PC-3 (cell line): ENCODE measurements at regions of chr9 and their contacts with region 1.

Region 1: GRCh38 chr9:132669698-132670456 is at the start of gene DDX31:
- DNase-seq: peak; percentile 65
- ATAC-seq: peak; percentile 75
- H3K4me3 ChIP-seq: peak within 1 kb of the TSS; percentile 91
- H3K27ac ChIP-seq: peak within 1 kb of the TSS; percentile 93
- H3K4me1 ChIP-seq: peaks cover 25% of the 10 kb centered on the region
- H3K27me3 ChIP-seq: no peaks in the 10 kb centered on the region
- CTCF ChIP-seq: no peak
- total RNA-seq, gene DDX31: 14.2 and 14.6 TPM in 2 replicates

Region 2: DNA sequence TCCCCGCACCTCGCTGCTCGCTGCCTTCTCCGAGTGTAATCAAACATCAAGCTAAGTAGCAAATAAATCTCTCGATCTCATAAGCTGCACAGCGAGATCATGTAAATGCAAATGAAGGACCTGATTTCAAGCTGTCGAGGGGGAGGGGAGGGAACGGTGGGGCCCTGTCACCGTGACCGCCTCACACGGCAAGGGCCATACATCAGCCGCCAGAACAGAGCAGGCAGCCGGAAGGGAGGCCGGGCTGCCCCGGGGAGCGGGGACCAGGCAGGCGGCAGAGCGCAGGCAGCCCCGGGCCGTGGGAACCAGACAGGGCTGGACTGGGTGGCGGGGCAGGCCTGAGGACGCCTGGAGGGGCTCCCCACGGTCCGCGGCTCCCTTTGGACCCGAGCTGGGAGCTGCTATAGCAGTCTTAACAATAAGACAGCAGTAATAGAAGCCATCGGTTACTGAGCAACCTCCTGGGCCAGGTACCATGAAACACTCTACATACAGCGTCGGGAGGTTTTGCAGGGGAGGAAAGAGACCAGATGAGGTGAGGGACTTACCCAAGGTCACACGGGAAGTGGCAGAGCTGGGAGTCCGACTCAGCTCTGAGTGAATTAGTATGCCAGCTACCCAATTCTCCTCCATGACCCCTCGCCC is 183.0 kb before region 1 on chr9:
- CTCF ChIA-PET with region 1: no interaction called
- POLR2A ChIA-PET with region 1: no interaction called
- intact Hi-C with region 1: no loop called
- DNase-seq: no peak
- ATAC-seq: no peak
- H3K4me3 ChIP-seq: no peak overlapping the region
- H3K27ac ChIP-seq: no peak overlapping the region
- H3K4me1 ChIP-seq: no peaks in the 10 kb centered on the region
- H3K27me3 ChIP-seq: peaks cover 43% of the 10 kb centered on the region
- CTCF ChIP-seq: no peak

Region 3: GRCh38 chr9:132622159-132622558 is 47.7 kb before region 1 on chr9:
- CTCF ChIA-PET with region 1: no interaction called
- POLR2A ChIA-PET with region 1: interaction called, 5 read pairs
- intact Hi-C with region 1: loop called (anchors 10 kb)
- DNase-seq: peak; percentile 34
- ATAC-seq: no peak
- H3K4me3 ChIP-seq: no peak overlapping the region
- H3K27ac ChIP-seq: no peak overlapping the region
- H3K4me1 ChIP-seq: peaks cover 25% of the 10 kb centered on the region
- H3K27me3 ChIP-seq: no peaks in the 10 kb centered on the region
- CTCF ChIP-seq: no peak

Region 4: DNA sequence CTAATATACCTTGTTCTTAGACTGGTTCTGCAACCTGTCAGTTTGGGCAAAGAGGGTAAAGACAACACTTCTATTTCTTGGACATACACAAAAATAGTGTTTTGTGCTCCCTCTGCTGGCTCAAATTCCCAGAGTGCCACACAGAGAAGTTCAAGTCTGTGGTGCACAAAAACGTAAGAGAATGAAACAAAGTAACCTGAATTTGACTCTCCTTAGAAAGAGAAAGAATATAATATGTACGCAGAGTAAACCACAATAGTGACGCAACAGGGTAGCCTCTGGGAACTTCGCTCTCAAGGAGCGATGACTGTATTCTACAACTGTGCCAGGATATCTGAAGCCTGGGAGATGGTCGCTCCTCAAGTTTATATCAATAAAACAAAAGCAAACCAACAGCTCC is 18.6 kb before region 1 on chr9:
- CTCF ChIA-PET with region 1: no interaction called
- POLR2A ChIA-PET with region 1: no interaction called
- intact Hi-C with region 1: no loop called
- DNase-seq: peak; percentile 78
- ATAC-seq: peak; percentile 83
- H3K4me3 ChIP-seq: no peak overlapping the region
- H3K27ac ChIP-seq: peak overlapping the region; percentile 81
- H3K4me1 ChIP-seq: peaks cover 41% of the 10 kb centered on the region
- H3K27me3 ChIP-seq: no peaks in the 10 kb centered on the region
- CTCF ChIP-seq: peak; percentile 74